ENCODE measurements at regions of chr11 and their contacts with region 1.

Region 1: DNA sequence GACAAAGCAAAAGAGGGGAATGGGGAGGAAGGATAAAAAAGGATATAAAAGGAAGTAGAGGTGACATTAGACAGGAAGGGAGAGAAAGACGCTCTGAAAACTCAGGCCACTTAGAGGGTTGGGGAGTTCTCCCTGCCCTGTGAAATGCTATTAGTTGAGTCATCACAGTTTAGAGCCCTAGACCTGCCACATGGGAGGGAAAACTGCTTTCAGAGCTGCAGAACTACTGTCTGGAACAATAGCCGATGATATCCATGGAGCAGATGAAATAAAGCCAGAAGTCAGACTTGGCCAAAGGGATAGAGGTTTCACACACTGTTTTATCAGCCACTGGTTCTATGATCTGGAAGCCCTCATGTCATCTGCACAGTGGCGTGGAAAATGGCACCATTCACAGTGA is 157.9 kb downstream of the NCAM1 start:
- DNase-seq: peak in 1 of 2 donors; percentile 10
- ATAC-seq: peak in 6 of 8 donors; percentile 36 to 83 (median 76)
- H3K4me3 ChIP-seq: no peak overlapping the region
- H3K27ac ChIP-seq: peak overlapping the region in 6 of 10 donors; percentile 25 to 60 (median 54)
- H3K4me1 ChIP-seq: peaks cover 0 to 58% (median 26%) of the 10 kb centered on the region in 9 donors
- H3K27me3 ChIP-seq: peaks cover 0 to 3% (median 0%) of the 10 kb centered on the region in 7 donors
- CTCF ChIP-seq: no peak

Region 2: GRCh38 chr11:112852143-112852866 is 266.8 kb before region 1 on chr11:
- intact Hi-C with region 1: loop called in 2 of 10 experiments (anchors 5 to 10 kb)
- DNase-seq: no peak
- ATAC-seq: peak in 7 of 8 donors; percentile 61 to 93 (median 83)
- H3K4me3 ChIP-seq: no peak overlapping the region
- H3K27ac ChIP-seq: peak overlapping the region; percentile 9 to 83 (median 54)
- H3K4me1 ChIP-seq: peaks cover 0 to 22% (median 2%) of the 10 kb centered on the region in 9 donors
- H3K27me3 ChIP-seq: no peaks in the 10 kb centered on the region
- CTCF ChIP-seq: no peak

Region 3: GRCh38 chr11:113176599-113177365 is 57.7 kb after region 1 on chr11:
- intact Hi-C with region 1: no loop called
- DNase-seq: no peak
- ATAC-seq: no peak
- H3K4me3 ChIP-seq: no peak overlapping the region
- H3K27ac ChIP-seq: no peak overlapping the region
- H3K4me1 ChIP-seq: peaks cover 4 to 52% (median 13%) of the 10 kb centered on the region in 9 donors
- H3K27me3 ChIP-seq: peaks cover 0 to 11% (median 0%) of the 10 kb centered on the region in 7 donors
- CTCF ChIP-seq: no peak

Measured in heart right ventricle (tissue), 16 donors.